Right ventricle myocardium inferior (tissue), 1 donor: ENCODE measurements at regions of chrX and their contacts with region 1.

Region 1: DNA sequence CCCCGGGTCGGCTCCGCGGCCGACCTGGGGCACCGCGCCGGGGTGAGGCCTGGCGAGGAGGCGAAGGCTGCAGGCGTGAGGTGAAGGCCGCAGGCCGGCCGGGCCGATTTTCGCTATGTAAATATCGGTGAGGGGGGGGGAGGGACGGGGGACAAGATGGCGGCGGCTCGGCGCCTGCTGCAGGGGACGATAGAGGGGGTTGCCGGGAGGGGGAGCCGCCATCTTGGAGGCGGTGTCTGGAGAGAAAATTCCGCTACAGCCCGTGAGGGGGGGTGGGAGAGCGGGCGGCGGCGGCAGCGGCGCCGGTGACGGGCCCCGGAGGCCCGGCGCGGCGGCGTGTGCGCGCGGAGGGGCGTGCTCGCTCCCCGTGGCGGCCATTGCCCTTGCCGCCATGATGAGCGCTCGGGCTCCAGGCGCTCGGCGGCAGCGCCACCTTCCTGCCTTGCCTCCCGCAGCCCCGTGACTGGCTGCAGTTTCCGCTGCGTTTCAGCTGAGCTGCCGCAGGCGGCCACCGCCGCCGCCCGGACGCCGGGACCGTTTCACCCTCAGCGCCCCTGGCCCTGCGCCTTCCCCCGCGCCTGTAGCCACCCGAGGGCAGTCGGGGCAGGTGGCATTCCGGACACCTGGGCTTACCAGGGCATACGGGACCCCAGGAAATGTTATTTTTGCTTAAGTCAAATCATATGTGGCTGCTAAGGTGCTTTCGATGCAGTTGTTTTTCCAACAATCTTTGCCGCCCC is 692 bp downstream of the ZFX start:
- DNase-seq: peak; percentile 90
- ATAC-seq: peak; percentile 89

Region 2: DNA sequence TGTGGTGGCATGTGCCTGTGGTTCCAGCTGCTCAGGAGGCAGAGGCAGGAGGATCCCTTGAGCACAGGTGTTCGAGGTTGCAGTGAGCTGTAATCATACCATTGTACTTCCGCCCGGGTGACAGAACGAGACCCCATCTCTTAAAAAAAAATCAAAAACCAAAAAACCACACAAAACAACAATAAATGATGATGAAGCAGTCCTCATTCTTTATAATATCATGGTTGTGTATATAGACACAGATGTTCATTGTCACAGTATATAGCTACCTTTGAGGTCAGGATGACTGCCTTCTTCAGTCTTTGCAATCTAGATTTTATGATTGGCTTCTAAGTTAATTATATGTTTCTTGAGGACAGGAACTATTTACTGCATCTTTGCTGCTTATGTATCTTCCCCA is 36.3 kb after region 1 on chrX:
- intact Hi-C with region 1: loop called (anchors 5 kb)
- DNase-seq: no peak
- ATAC-seq: no peak